ENCODE measurements at regions of chr5 and their contacts with region 1.

Region 1: DNA sequence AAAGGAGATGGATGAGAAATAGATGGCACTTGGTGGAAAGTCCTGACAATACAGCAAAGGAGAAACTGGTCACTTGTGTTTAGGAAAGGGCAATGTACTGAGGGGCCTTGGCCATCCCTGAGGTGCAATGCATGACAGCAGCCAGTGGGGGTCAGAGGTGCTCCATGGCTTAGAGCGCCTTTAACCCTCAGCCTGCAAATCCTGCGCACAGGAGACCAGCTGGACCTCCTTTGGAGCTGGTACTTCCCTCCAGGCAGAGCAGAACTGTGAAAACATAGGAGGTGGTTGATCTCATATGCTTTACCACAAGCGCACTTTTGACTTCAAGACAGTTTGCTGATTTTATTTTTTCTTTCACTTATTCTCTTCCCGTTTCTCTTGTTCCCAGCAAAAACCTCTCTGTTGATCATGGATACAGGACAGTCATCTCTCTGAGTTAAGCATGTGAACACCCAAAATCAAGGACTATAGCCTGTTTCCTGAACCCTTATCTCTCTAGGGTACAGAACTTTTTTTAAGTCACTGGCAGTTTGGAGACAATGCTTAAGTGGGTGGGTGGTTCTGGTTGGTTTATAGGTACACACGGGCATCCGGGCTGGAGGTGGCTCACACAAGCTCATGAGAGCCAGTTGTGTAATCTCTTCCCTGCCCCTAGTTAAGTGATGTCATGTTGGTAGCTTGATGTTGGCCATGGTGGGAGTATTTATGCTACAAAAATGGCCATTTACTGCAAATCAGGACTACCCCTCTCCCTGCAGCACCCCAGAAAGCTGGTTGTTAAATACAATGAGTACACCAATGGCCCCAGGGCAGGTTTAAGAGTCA is 37.6 kb upstream of the ANKRD55 start:
- DNase-seq: peak; percentile 64
- H3K4me3 Mint-ChIP-seq: peak overlapping the region; percentile 0
- H3K27ac Mint-ChIP-seq: no peak overlapping the region
- H3K4me1 Mint-ChIP-seq: peaks cover 20% of the 10 kb centered on the region
- H3K27me3 Mint-ChIP-seq: no peaks in the 10 kb centered on the region

Region 2: GRCh38 chr5:55936100-55936693 is 334.6 kb before region 1 on chr5:
- intact Hi-C with region 1: loop called (anchors 1 kb)
- DNase-seq: peak; percentile 67
- H3K4me3 Mint-ChIP-seq: no peak overlapping the region
- H3K27ac Mint-ChIP-seq: no peak overlapping the region
- H3K4me1 Mint-ChIP-seq: peaks cover 6% of the 10 kb centered on the region
- H3K27me3 Mint-ChIP-seq: no peaks in the 10 kb centered on the region

Region 3: DNA sequence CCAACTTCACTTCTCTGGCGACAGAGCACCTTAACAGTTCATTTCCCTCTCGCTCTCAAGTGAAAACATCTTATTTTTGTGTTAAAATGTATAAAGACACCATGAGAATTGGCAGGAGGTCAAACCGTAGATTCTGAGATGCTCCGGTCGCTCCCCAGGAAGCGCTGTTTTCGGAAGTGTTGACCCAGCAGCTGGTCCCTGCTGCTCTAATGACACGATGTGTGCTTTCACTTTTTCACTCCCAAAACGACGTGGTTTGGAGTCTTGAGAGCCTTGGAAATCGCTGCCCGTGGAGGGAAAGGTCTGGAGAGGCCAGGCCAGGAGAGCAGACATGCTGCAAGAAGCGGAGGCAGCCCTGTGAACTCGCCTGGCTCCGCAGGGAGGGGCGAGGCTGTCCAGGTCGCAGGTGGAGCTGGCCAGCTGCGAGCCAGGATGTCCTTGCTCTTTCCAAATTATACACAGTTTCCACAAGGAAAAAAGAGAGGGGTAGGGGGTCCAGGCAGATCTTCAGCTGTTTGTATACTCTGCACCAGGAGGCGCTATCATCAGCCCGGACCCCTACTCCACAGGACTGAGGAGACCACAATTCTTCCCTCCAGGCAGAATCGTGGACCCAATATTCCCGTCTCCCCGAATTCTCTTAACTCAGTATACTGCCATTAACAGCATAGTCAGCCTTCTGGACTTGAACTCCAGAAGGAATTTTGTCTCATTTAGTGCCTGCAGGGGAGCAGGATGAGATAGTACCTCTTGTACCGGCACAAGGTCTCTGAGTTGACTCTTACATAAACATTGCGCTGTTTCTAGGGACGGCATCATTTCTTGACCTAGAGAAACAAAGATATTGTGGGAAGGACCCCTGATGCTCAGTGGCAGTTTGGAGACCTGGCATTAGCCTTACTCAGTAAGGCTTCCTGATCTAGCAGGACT is 210.9 kb after region 1 on chr5:
- intact Hi-C with region 1: loop called (anchors 2 kb)
- DNase-seq: no peak
- H3K4me3 Mint-ChIP-seq: peak overlapping the region; percentile 78
- H3K27ac Mint-ChIP-seq: peak overlapping the region; percentile 82
- H3K4me1 Mint-ChIP-seq: peaks cover 44% of the 10 kb centered on the region
- H3K27me3 Mint-ChIP-seq: no peaks in the 10 kb centered on the region

Region 4: DNA sequence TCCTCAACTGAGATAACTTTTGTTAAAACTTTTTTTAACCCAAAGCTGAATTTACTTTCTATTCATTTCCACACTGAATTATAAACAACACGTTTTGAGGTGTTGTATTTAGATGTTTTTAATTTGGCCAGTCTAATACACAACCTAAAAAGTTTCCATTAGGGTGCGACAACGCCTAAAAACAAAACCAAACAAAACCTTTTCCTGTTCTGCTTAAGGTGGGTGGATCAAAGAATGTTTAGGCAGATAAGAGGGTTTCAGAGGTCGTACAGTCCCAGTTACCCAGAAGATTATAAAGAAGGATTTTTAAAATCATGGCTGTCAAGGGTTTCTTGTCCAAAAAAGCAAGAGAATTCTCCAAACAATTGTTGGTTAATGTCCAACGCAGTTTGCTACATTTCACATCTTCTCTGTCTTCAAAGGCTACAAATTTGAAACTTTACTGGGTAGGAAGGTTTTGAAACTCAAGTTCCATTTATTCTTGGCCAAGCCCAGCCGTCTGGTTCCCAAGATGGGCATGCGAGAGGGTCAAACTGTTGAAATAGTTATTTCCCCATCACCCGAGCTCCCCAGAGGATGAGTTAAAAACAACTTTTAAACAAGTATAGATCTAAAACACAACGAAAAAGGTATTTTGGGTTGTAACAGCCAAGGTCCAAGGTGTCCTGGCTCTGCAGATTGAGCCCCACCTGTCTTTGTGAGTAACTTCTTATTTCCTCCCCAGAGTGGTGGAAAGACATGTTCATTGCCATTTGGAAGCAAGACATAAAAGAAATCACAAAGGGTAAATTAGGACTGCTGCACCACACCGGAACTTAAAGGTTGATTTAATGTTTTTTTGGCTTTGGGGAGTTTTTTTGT is 421.8 kb after region 1 on chr5:
- intact Hi-C with region 1: loop called (anchors 2 kb)
- DNase-seq: no peak
- H3K4me3 Mint-ChIP-seq: peak overlapping the region; percentile 28
- H3K27ac Mint-ChIP-seq: peak overlapping the region; percentile 30
- H3K4me1 Mint-ChIP-seq: peaks cover 62% of the 10 kb centered on the region
- H3K27me3 Mint-ChIP-seq: no peaks in the 10 kb centered on the region

Region 5: DNA sequence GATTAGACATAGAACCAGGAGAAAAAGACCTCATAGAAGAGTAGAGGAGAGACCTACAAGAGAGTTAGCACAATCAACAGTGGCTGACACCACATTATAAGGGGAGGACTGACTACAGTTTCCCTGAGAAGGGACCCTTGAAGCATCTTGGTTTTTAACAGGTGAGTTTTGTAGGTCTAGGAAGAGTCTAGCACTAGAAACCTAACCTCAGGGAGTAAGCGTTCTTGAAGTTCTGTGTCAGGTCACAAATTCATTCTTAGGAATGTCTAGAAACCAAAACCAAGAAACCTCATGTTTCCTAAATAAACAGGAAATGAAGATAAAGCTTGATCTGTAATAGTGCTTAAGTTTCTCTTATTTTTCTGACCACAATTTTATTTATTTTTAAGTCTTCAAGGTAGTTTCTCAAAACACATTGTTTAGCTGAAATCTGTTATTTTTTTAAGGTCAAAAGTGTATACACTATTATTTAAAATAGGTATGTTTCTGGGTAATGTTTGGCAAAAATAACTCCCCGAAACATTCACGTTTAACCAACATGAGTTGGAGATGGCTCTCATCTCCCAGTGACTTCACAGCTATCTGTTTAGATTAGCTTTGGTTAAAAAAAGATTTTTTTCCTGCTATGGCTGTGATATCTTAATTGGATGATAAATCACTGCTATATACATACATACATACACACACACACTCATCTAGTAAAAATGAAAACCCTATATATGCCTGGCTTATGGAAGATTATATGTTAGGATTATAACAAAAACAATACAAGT is 581.6 kb after region 1 on chr5:
- intact Hi-C with region 1: loop called (anchors 5 kb)
- DNase-seq: no peak
- H3K4me3 Mint-ChIP-seq: no peak overlapping the region
- H3K27ac Mint-ChIP-seq: no peak overlapping the region
- H3K4me1 Mint-ChIP-seq: peaks cover 68% of the 10 kb centered on the region
- H3K27me3 Mint-ChIP-seq: no peaks in the 10 kb centered on the region

Measured in activated T-helper 2 cell treated with anti-CD3 and anti-CD28 coated beads, Interferon-gamma antibody, Interleukin-2, Interleukin-4, amounts not matched to agents 10 μg/mL and 5 μg/mL and 100 μg/mL, durations not matched to agents 14 hours and 24 hours and 36 hours (primary cell).